ENCODE measurements at regions of chr17 and their contacts with region 1.

Region 1: GRCh38 chr17:50478391-50479381 is at the start of gene RSAD1:
- DNase-seq: peak; percentile 88 to 94 (median 89)
- ATAC-seq: peak; percentile 61 to 93 (median 83)
- H3K4me3 ChIP-seq: peak within 1 kb of the TSS; percentile 47 to 96 (median 83)
- H3K27ac ChIP-seq: peak within 1 kb of the TSS; percentile 2 to 93 (median 86)
- H3K4me1 ChIP-seq: peaks cover 0 to 51% (median 32%) of the 10 kb centered on the region in 12 donors
- H3K27me3 ChIP-seq: no peaks in the 10 kb centered on the region
- CTCF ChIP-seq: peak; percentile 80 to 98 (median 96)
- POLR2A ChIP-seq: peak in 1 of 2 donors; percentile 92
- total RNA-seq, gene RSAD1: 30.9 to 50.0 (median 42.8) TPM

Region 2: DNA sequence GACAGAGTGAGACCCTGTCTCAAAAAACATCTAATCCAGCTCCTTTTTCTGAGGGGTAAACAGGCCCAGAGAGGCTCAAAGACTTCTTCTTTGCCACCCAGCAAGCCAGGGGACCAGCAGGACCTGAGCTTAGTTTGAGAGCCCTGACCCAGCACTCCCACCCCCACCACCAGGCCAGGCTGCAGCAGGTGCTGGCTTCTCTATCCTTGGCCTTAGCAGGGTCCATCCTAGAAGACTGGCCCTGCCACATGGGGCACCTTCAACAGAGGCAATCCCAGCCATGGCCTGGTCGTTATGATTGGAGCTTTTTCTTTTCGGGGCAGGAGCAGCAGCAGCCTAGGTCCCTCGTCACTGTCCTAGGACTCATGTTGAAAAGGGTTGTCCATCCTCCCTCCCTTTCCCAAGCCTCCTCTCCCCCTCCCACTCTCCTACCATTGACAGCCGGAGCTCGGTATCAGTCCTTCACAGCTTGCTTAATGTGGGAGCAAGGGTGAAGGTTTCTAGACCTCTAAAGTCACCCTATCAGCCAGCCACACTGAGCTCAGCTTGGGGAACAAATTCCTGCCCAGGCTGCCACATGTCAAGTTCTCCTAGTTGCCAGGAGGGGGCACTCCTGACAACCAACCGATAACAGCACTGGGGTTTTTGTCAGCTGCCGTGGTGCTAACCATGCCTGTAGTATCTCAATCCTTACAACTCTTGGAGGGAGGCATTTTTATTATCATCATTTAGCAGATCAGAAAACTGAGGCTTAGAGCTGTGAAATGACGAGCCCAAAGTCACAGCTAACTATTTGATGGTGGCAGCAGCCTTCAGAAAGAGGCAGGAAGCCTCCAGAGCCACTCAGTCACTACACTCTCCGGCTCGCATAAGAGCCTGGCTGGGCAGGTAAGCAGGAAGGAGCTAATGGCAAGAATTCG is 116.9 kb before region 1 on chr17:
- intact Hi-C with region 1: loop called in 3 of 10 experiments (anchors 5 to 10 kb)
- DNase-seq: peak in 3 of 5 donors; percentile 46 to 57 (median 57)
- ATAC-seq: peak; percentile 33 to 66 (median 58)
- H3K4me3 ChIP-seq: no peak overlapping the region
- H3K27ac ChIP-seq: peak overlapping the region in 1 of 12 donors; percentile 0
- H3K4me1 ChIP-seq: peaks cover 0 to 46% (median 10%) of the 10 kb centered on the region in 12 donors
- H3K27me3 ChIP-seq: no peaks in the 10 kb centered on the region
- CTCF ChIP-seq: peak; percentile 48 to 79 (median 66)
- POLR2A ChIP-seq: no peak

Region 3: DNA sequence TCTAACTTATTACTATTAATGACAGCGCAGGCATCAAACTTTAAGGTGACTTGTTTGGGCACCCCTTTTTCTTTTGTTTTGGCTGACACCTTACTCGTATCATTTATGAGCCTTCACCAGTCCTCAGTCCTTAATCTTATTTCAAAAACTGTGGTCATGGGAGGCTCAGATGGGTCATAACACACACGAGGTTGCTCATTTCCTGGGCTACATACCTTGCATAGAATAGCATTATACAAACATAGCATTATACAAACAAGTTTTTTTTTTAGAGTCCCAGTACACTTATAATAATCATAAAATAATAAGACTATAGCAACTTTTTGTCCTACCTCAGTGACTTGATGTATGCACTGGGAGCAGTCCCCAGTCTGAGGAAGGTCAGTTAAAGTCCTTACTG is 63.9 kb before region 1 on chr17:
- intact Hi-C with region 1: loop called in 2 of 10 experiments (anchors 10 kb)
- DNase-seq: no peak
- ATAC-seq: no peak
- H3K4me3 ChIP-seq: no peak overlapping the region
- H3K27ac ChIP-seq: no peak overlapping the region
- H3K4me1 ChIP-seq: no peaks in the 10 kb centered on the region
- H3K27me3 ChIP-seq: peaks cover 0 to 1% (median 0%) of the 10 kb centered on the region in 9 donors
- CTCF ChIP-seq: no peak
- POLR2A ChIP-seq: no peak

Region 4: DNA sequence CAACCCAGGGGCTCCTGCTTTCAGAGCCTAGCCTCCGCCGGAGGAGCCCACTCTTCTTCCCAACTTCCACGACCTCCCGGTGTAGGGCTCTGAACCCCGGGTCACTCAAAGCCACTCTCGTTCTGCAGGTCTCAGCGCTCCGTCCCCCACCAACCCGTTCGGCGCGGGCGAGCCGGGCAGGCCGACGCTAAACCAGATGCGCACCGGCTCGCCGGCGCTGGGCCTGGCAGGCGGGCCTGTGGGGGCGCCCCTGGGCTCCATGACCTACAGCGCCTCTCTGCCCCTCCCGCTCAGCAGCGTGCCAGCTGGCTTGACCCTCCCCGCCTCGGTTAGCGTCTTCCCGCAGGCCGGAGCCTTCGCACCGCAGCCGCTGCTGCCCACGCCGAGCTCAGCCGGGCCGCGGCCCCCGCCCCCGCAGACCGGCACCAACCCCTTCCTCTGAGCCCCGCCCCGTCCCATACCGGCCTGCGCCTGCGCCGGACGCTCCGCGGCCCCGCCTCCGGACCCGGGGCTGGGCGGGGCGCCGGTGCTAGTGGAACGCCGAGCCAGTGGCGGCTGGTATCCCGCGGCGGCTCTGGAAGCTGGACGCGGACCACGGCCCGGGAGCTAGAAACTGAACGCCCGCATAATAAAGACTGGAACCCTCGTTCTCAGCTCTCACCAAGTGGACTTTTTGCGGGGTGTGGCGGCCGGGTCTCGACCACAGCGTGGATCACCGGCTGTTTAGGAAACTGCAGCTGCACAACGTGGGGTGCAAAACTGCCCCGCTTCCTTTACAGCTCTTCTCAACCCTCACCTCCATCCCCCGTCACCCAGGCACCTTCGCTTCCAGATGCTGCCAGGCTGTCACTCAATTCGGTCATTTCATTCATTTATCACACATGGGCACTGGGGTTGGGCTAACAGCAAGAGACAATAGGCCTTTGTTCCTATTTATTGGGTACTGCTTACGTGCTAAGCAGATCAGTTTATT is 63.3 kb after region 1 on chr17:
- intact Hi-C with region 1: loop called in 7 of 10 experiments (anchors 2 to 5 kb)
- DNase-seq: peak; percentile 88 to 96 (median 89)
- ATAC-seq: peak; percentile 65 to 93 (median 90)
- H3K4me3 ChIP-seq: peak overlapping the region; percentile 27 to 86 (median 64)
- H3K27ac ChIP-seq: peak overlapping the region in 11 of 12 donors; percentile 56 to 89 (median 82)
- H3K4me1 ChIP-seq: peaks cover 0 to 42% (median 21%) of the 10 kb centered on the region in 12 donors
- H3K27me3 ChIP-seq: peaks cover 0 to 2% (median 0%) of the 10 kb centered on the region in 9 donors
- CTCF ChIP-seq: peak in 6 of 12 donors; percentile 12 to 50 (median 33)
- POLR2A ChIP-seq: peak in 1 of 2 donors; percentile 86

Region 5: DNA sequence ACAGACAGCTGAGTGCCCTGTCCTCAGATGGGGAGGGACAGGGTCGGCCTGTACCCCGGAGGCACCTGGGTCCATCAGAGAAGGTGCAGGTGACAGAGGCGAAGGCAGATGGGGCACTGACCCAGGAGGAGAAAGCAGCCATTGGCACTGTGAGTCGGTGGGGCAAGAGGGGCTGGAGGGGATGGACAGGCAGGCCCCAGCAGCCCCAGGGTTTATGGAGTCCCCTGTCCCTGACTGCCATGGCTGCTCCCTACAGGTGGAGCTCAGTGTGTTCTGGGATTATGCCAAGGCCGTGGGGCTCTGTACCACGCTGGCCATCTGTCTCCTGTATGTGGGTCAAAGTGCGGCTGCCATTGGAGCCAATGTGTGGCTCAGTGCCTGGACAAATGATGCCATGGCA is 196.9 kb after region 1 on chr17:
- intact Hi-C with region 1: loop called in 3 of 10 experiments (anchors 5 to 10 kb)
- DNase-seq: no peak
- ATAC-seq: peak in 2 of 4 donors; percentile 34 to 50
- H3K4me3 ChIP-seq: no peak overlapping the region
- H3K27ac ChIP-seq: no peak overlapping the region
- H3K4me1 ChIP-seq: peaks cover 0 to 7% (median 0%) of the 10 kb centered on the region in 12 donors
- H3K27me3 ChIP-seq: no peaks in the 10 kb centered on the region
- CTCF ChIP-seq: no peak
- POLR2A ChIP-seq: no peak

Region 6: GRCh38 chr17:50841949-50842354 is 363.3 kb after region 1 on chr17:
- intact Hi-C with region 1: loop called in 1 of 10 experiments (anchors 5 kb)
- DNase-seq: peak; percentile 49 to 81 (median 60)
- ATAC-seq: peak in 3 of 4 donors; percentile 47 to 73 (median 57)
- H3K4me3 ChIP-seq: no peak overlapping the region
- H3K27ac ChIP-seq: no peak overlapping the region
- H3K4me1 ChIP-seq: peaks cover 0 to 20% (median 6%) of the 10 kb centered on the region in 12 donors
- H3K27me3 ChIP-seq: no peaks in the 10 kb centered on the region
- CTCF ChIP-seq: peak; percentile 55 to 87 (median 79)
- POLR2A ChIP-seq: no peak

Region 7: DNA sequence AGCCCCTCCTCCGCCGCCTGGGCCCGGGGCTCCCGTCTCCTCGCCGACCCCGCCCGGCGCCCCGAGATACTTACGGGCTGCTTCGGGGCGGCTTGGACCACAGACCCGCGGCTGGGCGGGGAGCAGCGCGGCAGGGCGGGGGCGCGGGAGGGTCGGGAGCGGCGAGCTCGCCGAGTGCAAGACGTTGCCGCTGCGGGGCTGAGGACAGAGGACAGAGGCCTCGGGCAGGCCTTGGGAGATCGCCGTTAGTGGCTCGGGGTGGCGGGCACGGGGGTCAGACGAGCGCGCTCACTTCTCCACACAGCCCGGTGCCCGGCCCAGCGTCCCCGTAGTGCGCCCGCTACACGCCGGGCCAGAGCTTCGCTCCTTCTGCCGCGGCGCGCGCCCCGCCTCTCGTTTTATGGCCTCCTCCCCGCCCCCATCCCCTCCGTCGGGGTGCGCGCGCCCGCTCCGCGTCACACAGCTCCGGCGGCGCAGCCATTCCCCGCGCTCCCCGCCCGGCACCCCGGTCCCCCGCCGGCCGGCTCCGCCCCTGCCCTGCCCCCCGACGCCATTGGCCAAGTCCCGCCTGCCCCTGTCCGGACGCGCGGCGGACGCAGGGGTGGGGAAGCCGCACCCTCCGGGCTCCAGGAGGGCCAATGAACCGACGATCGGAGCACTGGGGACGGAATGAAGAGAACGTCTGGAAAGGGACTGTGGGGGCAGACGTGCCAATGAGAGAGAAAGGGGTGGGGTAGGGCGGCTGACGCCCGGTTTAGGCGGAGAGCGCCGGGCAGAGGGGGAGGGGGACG is 387.5 kb after region 1 on chr17 and contains the start of gene TOB1:
- intact Hi-C with region 1: no loop called
- DNase-seq: peak; percentile 99
- ATAC-seq: peak; percentile 88 to 93 (median 91)
- H3K4me3 ChIP-seq: peak within 1 kb of the TSS; percentile 75 to 97 (median 90)
- H3K27ac ChIP-seq: peak within 1 kb of the TSS; percentile 99 to 100 (median 100)
- H3K4me1 ChIP-seq: peaks cover 2 to 54% (median 32%) of the 10 kb centered on the region in 12 donors
- H3K27me3 ChIP-seq: no peaks in the 10 kb centered on the region
- CTCF ChIP-seq: no peak
- POLR2A ChIP-seq: peak; percentile 98 to 100
- total RNA-seq, gene TOB1: 38.3 to 136 (median 88.7) TPM

Measured in heart left ventricle (tissue), 16 donors.